Heart right ventricle (tissue), 16 donors: ENCODE measurements at regions of chr10 and their contacts with region 1.

Region 1: DNA sequence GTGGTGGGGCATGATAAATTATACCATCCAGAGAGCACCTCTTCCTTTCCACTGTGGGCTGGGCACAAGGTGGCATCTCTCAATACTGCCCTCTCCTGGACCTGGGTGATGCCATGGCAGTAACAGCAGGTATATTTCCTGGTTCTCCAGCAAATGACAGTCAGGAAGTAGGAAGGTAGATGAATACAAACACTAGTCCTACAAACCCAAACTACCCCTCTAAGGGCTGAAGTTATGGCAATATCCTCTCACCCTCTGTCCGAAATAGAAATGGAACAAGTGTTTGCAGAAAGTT is 1004.9 kb downstream of the KCNMA1 start:
- DNase-seq: no peak
- ATAC-seq: peak in 6 of 8 donors; percentile 30 to 74 (median 61)
- H3K4me3 ChIP-seq: peak overlapping the region in 2 of 10 donors; percentile 9 to 16
- H3K27ac ChIP-seq: no peak overlapping the region
- H3K4me1 ChIP-seq: peaks cover 0 to 16% (median 5%) of the 10 kb centered on the region in 9 donors
- H3K27me3 ChIP-seq: peaks cover 0 to 5% (median 0%) of the 10 kb centered on the region in 7 donors
- CTCF ChIP-seq: peak in 5 of 9 donors; percentile 19 to 41 (median 24)

Region 2: GRCh38 chr10:76984559-76985443 is 352.1 kb after region 1 on chr10:
- intact Hi-C with region 1: loop called in 2 of 10 experiments (anchors 10 kb)
- DNase-seq: peak; percentile 47 to 58
- ATAC-seq: peak in 6 of 8 donors; percentile 57 to 87 (median 72)
- H3K4me3 ChIP-seq: no peak overlapping the region
- H3K27ac ChIP-seq: no peak overlapping the region
- H3K4me1 ChIP-seq: no peaks in the 10 kb centered on the region
- H3K27me3 ChIP-seq: peaks cover 0 to 8% (median 0%) of the 10 kb centered on the region in 7 donors
- CTCF ChIP-seq: peak; percentile 65 to 97 (median 95)